Mammary epithelial cell (primary cell): ENCODE measurements at regions of chr4 and their contacts with region 1.

Region 1: GRCh38 chr4:153142700-153143438 is 61.4 kb upstream of the TRIM2 start:
- DNase-seq: peak; percentile 50
- H3K4me3 ChIP-seq: no peak overlapping the region
- H3K27ac ChIP-seq: no peak overlapping the region
- H3K4me1 ChIP-seq: peaks cover 22% of the 10 kb centered on the region
- H3K27me3 ChIP-seq: no peaks in the 10 kb centered on the region
- CTCF ChIP-seq: peak; percentile 84 to 94

Region 2: DNA sequence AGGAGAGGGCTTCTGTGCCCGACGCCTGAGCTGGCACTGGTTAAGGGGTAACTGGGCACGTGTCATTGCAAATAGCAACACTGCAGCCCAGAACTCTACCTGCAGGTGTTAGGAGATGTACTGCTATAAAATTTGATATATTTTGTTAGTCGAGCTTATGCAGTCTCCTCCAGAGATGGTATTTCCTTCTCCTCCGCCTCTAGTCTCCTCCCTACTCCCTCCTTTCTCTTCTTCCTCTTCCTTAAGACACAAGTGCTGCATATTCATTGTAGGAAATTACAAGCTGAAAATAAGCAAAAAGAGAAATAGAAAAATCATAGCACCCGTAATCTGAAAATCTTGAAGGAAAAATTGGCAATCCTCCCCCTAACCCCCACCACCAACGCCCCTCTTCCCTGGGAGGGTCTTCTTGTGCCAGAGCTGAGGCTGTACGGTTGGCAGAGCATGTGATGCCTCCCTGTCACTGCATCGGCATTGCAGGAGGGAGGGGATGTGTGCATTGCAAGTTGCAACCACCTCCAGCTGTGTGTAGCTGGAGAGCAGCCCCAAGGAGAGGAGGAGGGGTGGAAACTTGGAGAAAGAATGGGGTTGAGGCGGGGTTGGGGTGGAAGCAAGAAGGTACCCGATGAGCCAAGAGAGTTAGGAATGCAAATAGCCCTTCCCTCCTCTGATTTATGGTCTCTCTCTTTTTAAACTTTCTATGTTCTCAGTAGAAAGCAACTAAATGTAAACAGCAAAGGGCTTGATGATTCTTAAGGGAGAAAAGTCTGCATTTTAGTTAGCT is 153.4 kb after region 1 on chr4:
- CTCF ChIA-PET with region 1: interaction called, 4 read pairs
- dilution Hi-C with region 1: loop called (anchors 25 kb)
- in situ Hi-C with region 1: no loop called
- intact Hi-C with region 1: loop called (anchors 1 kb)
- DNase-seq: peak; percentile 39
- H3K4me3 ChIP-seq: peak overlapping the region in 1 of 3 experiments; percentile 19
- H3K27ac ChIP-seq: no peak overlapping the region
- H3K4me1 ChIP-seq: peaks cover 36% of the 10 kb centered on the region
- H3K27me3 ChIP-seq: no peaks in the 10 kb centered on the region
- CTCF ChIP-seq: no peak

Region 3: GRCh38 chr4:153344131-153345010 is 201.5 kb after region 1 on chr4 and contains the start of gene MND1:
- CTCF ChIA-PET with region 1: interaction called, 3 read pairs
- dilution Hi-C with region 1: no loop called
- in situ Hi-C with region 1: no loop called
- intact Hi-C with region 1: loop called (anchors 1 kb)
- DNase-seq: peak; percentile 80
- H3K4me3 ChIP-seq: peak within 1 kb of the TSS; percentile 58 to 95 (median 86)
- H3K27ac ChIP-seq: peak within 1 kb of the TSS; percentile 93
- H3K4me1 ChIP-seq: peaks cover 12% of the 10 kb centered on the region
- H3K27me3 ChIP-seq: no peaks in the 10 kb centered on the region
- CTCF ChIP-seq: peak in 1 of 2 donors; percentile 84
- total RNA-seq, gene MND1: 0.83 to 10.4 TPM

Region 4: GRCh38 chr4:153573881-153574802 is 431.3 kb after region 1 on chr4:
- CTCF ChIA-PET with region 1: no interaction called
- dilution Hi-C with region 1: no loop called
- in situ Hi-C with region 1: loop called (anchors 10 to 25 kb)
- intact Hi-C with region 1: loop called (anchors 1 kb)
- DNase-seq: peak; percentile 61
- H3K4me3 ChIP-seq: no peak overlapping the region
- H3K27ac ChIP-seq: no peak overlapping the region
- H3K4me1 ChIP-seq: peaks cover 6% of the 10 kb centered on the region
- H3K27me3 ChIP-seq: no peaks in the 10 kb centered on the region
- CTCF ChIP-seq: peak; percentile 53 to 69

Region 5: GRCh38 chr4:153750197-153750817 is 607.4 kb after region 1 on chr4:
- CTCF ChIA-PET with region 1: no interaction called
- dilution Hi-C with region 1: no loop called
- in situ Hi-C with region 1: no loop called
- intact Hi-C with region 1: loop called (anchors 1 kb)
- DNase-seq: peak; percentile 80
- H3K4me3 ChIP-seq: no peak overlapping the region
- H3K27ac ChIP-seq: peak overlapping the region; percentile 24
- H3K4me1 ChIP-seq: peaks cover 31% of the 10 kb centered on the region
- H3K27me3 ChIP-seq: no peaks in the 10 kb centered on the region
- CTCF ChIP-seq: peak; percentile 82 to 86